Posterior vena cava (tissue), 2 donors: ENCODE measurements at regions of chr17 and their contacts with region 1.

Region 1: GRCh38 chr17:39069114-39069756 is 82.2 kb downstream of the PLXDC1 start:
- DNase-seq: peak; percentile 22

Region 2: DNA sequence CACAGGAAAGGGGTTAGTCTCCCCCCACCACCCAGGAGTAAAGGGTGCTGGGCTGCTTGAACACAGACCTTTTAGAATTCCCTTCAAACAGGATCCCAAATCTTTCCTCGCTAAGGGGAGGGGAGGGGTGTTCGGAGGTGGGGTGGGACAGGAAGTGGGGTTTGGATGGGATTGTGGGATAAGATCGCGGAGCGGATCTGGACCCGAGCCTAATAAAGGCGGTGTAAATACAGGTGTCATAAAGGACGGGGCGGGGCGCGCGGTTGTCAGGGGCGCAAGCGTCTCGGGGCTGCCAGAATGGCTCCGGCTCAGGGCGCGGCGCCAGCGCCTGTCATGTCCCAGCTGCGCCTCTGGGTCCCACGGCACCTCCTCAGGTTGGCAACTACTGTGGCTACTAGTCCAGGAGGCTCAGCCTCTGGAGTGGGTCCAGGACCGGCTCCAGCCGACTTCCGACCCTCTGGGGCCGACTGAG is 42.2 kb before region 1 on chr17:
- intact Hi-C with region 1: no loop called
- DNase-seq: peak; percentile 90

Region 3: GRCh38 chr17:39099663-39100286 is 30.5 kb after region 1 on chr17:
- intact Hi-C with region 1: loop called in 1 of 2 experiments (anchors 5 kb)
- DNase-seq: no peak

Region 4: DNA sequence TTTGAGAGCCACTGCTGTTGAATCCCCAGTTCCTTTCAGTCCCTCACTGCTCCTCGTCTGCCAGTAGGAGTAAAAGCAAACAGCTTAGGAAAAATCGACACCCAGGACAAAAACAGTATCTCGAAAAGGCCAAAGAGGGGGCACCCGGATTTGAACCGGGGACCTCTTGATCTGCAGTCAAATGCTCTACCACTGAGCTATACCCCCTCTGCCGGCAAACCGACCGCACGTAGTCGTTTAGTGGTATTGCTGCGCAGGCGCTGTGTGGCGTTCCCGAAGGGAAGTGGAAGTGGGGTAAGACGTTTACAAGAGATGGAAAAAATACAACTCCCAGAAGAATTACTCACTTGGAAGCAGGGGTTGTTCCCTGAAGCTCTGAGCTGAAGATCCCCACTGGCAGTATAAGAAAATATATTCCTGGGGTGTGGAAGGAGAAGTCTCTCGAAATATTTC is 84.4 kb after region 1 on chr17:
- intact Hi-C with region 1: loop called (anchors 5 to 10 kb)
- DNase-seq: peak; percentile 97